AG04450 (cell line): ENCODE measurements at regions of chr2 and their contacts with region 1.

Region 1: GRCh38 chr2:23418461-23418911 is 33.5 kb downstream of the KLHL29 start:
- DNase-seq: peak; percentile 63
- H3K4me3 ChIP-seq: no peak overlapping the region
- H3K27ac ChIP-seq: peak overlapping the region; percentile 89
- H3K27me3 ChIP-seq: peaks cover 2% of the 10 kb centered on the region
- CTCF ChIP-seq: no peak

Region 2: GRCh38 chr2:23249348-23249747 is 169.1 kb before region 1 on chr2:
- CTCF ChIA-PET with region 1: no interaction called
- POLR2A ChIA-PET with region 1: no interaction called
- DNase-seq: no peak
- H3K4me3 ChIP-seq: no peak overlapping the region
- H3K27ac ChIP-seq: no peak overlapping the region
- H3K27me3 ChIP-seq: no peaks in the 10 kb centered on the region
- CTCF ChIP-seq: no peak

Region 3: GRCh38 chr2:23293731-23294130 is 124.8 kb before region 1 on chr2:
- CTCF ChIA-PET with region 1: no interaction called
- POLR2A ChIA-PET with region 1: no interaction called
- DNase-seq: no peak
- H3K4me3 ChIP-seq: no peak overlapping the region
- H3K27ac ChIP-seq: no peak overlapping the region
- H3K27me3 ChIP-seq: no peaks in the 10 kb centered on the region
- CTCF ChIP-seq: no peak

Region 4: GRCh38 chr2:23351388-23352141 is 66.9 kb before region 1 on chr2:
- CTCF ChIA-PET with region 1: no interaction called
- POLR2A ChIA-PET with region 1: no interaction called
- DNase-seq: peak; percentile 30
- H3K4me3 ChIP-seq: no peak overlapping the region; the same call in 1 of the 2 replicates
- H3K27ac ChIP-seq: no peak overlapping the region
- H3K27me3 ChIP-seq: peaks cover 9% of the 10 kb centered on the region
- CTCF ChIP-seq: peak; percentile 87

Region 5: DNA sequence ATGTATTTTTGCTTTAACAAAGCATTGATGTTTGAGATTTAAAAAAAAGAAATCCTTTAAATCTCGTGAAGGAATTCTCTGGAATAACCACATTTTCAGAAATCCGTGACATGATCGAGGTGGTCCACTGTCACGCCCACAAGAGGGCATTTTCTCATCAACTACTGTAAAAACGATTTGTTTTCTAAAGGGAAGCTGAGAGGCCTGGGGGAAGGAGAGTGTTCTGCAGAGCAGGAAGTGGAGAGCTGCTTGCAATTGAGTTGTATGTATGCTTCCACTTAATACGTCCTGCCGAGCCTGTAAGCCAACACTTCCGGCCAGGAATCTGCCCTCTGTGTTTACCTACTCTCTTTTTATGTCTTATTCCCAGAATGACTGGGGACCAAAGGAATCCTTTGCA is 14.1 kb before region 1 on chr2:
- CTCF ChIA-PET with region 1: no interaction called
- POLR2A ChIA-PET with region 1: interaction called, 10 read pairs
- DNase-seq: peak; percentile 57
- H3K4me3 ChIP-seq: no peak overlapping the region
- H3K27ac ChIP-seq: peak overlapping the region; percentile 34
- H3K27me3 ChIP-seq: no peaks in the 10 kb centered on the region
- CTCF ChIP-seq: peak; percentile 30; the same call in 1 of the 2 replicates